WTC11 (cell line): ENCODE measurements at regions of chr15 and their contacts with region 1.

Region 1: GRCh38 chr15:29988689-29989088 is 94.1 kb upstream of the GOLGA8J start:
- DNase-seq: no peak
- ATAC-seq: no peak
- H3K4me3 Mint-ChIP-seq: no peak overlapping the region
- H3K27ac Mint-ChIP-seq: 0 out of 2 replicates have a peak overlapping the region, but pooled peaks have one; percentile 13
- H3K4me1 Mint-ChIP-seq: peaks cover 47% of the 10 kb centered on the region
- H3K27me3 Mint-ChIP-seq: no peaks in the 10 kb centered on the region
- CTCF ChIP-seq: no peak

Region 2: DNA sequence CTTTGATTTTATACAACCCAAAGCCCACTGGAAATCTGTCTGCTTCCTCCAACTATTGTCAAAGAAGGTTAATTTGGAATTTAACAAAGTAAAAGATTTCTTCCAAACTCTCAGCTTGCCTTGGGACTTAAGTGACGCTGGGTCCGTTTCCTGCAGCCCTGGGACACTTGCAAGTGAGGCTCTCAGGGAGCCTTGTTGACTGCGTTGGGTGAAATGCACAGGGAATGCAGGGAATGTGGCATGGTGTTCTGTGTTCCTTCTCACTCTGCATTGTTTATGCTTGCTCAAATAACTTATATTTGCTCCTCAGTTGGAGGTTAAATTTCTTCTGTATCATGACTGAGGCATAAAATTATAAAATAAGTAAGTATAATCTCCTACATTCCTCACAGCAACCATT is 105.6 kb before region 1 on chr15:
- CTCF ChIA-PET with region 1: no interaction called
- POLR2A ChIA-PET with region 1: no interaction called
- DNase-seq: no peak
- ATAC-seq: peak; percentile 85
- H3K4me3 Mint-ChIP-seq: no peak overlapping the region
- H3K27ac Mint-ChIP-seq: no peak overlapping the region; the same call in 1 of the 2 replicates
- H3K4me1 Mint-ChIP-seq: peaks cover 31% of the 10 kb centered on the region
- H3K27me3 Mint-ChIP-seq: no peaks in the 10 kb centered on the region
- CTCF ChIP-seq: no peak

Region 3: DNA sequence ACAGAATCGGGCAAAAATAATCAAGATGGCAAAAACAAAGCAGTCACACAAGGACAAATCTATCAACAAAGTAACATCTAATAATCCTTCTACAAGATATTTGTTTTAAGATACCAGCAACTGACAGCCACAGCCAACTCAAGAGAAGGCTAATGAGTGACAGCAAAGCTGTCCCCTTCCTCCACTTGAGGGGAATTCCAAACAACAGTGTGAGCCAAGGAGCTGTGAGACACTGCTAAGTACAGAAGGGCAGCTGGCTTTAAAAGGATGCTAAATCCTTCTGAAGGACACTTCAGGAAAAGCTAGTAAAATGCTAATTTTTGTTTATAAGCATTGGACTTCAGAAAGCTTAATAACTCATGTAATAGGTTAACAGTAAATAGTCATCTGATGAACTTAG is 26.3 kb before region 1 on chr15:
- CTCF ChIA-PET with region 1: interaction called, 12 read pairs
- POLR2A ChIA-PET with region 1: no interaction called
- DNase-seq: no peak
- ATAC-seq: no peak
- H3K4me3 Mint-ChIP-seq: no peak overlapping the region
- H3K27ac Mint-ChIP-seq: peak overlapping the region; percentile 28
- H3K4me1 Mint-ChIP-seq: peaks cover 9% of the 10 kb centered on the region
- H3K27me3 Mint-ChIP-seq: peaks cover 19% of the 10 kb centered on the region
- CTCF ChIP-seq: no peak

Region 4: GRCh38 chr15:29967956-29968889 is 20.5 kb before region 1 on chr15:
- CTCF ChIA-PET with region 1: interaction called, 13 read pairs
- POLR2A ChIA-PET with region 1: no interaction called
- DNase-seq: peak; percentile 54
- ATAC-seq: peak; percentile 83
- H3K4me3 Mint-ChIP-seq: peak overlapping the region; percentile 61
- H3K27ac Mint-ChIP-seq: no peak overlapping the region
- H3K4me1 Mint-ChIP-seq: peaks cover 9% of the 10 kb centered on the region; the same call in 1 of the 2 replicates
- H3K27me3 Mint-ChIP-seq: peaks cover 67% of the 10 kb centered on the region
- CTCF ChIP-seq: no peak

Region 5: GRCh38 chr15:30065025-30065801 is 76.5 kb after region 1 on chr15:
- CTCF ChIA-PET with region 1: no interaction called
- POLR2A ChIA-PET with region 1: no interaction called
- DNase-seq: no peak
- ATAC-seq: no peak
- H3K4me3 Mint-ChIP-seq: no peak overlapping the region
- H3K27ac Mint-ChIP-seq: no peak overlapping the region
- H3K4me1 Mint-ChIP-seq: peaks cover 3% of the 10 kb centered on the region
- H3K27me3 Mint-ChIP-seq: peaks cover 3% of the 10 kb centered on the region; the same call in 1 of the 2 replicates
- CTCF ChIP-seq: no peak